Psoas muscle (tissue), 8 donors: ENCODE measurements at regions of chr3 and their contacts with region 1.

Region 1: DNA sequence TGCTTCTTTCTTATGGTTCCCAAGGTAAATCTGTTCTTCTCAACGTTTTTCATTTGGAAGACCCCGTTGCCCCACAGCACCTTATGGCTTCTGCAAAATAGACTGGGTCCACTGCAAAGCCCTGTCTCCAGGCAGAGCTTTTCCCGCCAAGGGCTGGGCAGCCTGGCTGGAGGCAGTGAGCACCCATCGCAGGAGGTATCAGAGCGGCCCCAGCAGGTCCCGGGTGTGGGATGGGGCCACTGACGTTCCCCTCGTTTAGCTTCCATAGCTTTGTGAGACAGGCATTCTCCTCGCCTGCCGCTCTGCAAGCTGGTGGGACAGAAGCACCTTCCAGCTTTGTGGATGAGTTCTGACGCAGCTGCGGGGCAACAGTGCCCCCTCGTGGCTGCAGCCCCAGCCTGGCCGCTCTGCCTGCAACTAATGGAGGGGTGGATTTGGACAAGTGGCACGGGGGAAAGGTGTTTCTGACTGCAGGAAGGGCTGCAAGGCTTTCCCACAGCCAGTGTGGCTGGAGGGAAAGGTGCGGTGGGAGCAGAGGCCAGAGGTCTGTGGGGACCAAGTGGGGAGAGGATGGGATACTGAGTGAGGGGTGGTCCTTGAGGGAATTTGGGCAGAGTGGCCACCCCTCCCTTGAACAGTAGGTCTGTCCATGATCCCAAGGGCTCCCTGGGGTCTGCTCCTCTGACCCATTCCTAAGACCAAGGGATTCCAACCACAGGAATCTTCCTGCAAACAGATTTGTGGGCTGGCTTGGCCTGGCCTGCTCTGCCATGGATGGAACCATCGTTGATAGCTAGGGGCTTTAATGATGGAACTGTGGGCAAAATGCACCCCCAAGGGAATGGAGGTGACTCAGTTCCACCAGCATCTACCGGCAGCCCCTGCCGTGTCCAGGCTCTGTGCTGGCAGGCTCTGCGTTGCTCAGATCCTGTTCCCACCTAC is 99.4 kb downstream of the FBLN2 start:
- DNase-seq: peak; percentile 83 to 88
- ATAC-seq: peak; percentile 80 to 90 (median 84)
- H3K4me3 ChIP-seq: no peak overlapping the region
- H3K27ac ChIP-seq: no peak overlapping the region
- H3K4me1 ChIP-seq: peaks cover 4% of the 10 kb centered on the region
- H3K27me3 ChIP-seq: peaks cover 0 to 9% (median 0%) of the 10 kb centered on the region in 3 donors
- CTCF ChIP-seq: peak; percentile 97

Region 2: DNA sequence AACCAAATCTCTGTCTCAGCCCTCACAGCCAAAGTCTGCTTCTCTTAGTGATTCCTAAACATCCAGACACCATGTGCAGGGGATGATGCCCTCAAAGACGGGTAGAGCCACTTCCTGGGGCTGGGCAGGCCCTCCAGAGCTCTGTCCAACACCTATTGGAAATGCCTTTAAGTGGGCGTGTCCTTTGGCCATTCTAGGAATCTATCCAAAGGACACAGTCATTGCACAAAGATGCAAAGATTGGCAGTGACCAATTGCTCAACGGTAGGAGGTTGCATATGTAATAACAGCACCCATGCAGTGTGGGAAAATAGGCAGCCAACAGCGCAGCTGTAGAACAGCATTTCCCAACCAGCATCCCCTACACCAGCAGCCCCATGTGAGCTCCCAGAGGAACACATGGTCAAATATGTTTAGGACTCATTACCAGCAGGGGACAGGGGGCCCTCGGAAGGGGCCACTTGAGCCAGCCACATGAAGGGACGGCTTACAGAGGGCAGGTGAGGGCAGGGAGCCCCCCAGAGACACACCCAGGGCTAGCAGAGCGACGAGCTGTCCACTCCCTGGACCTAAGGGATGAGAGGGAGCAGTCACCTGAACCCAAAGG is 432.3 kb before region 1 on chr3:
- intact Hi-C with region 1: loop called in 1 of 2 experiments (anchors 5 kb)
- DNase-seq: peak in 1 of 2 donors; percentile 23
- ATAC-seq: peak in 1 of 4 donors; percentile 4
- H3K4me3 ChIP-seq: no peak overlapping the region
- H3K27ac ChIP-seq: no peak overlapping the region
- H3K4me1 ChIP-seq: no peaks in the 10 kb centered on the region
- H3K27me3 ChIP-seq: no peaks in the 10 kb centered on the region
- CTCF ChIP-seq: no peak

Region 3: GRCh38 chr3:13419505-13420044 is 228.8 kb before region 1 on chr3:
- intact Hi-C with region 1: no loop called
- DNase-seq: peak; percentile 41 to 71
- ATAC-seq: peak; percentile 81 to 90 (median 84)
- H3K4me3 ChIP-seq: peak overlapping the region; percentile 77
- H3K27ac ChIP-seq: peak overlapping the region; percentile 78
- H3K4me1 ChIP-seq: peaks cover 9% of the 10 kb centered on the region
- H3K27me3 ChIP-seq: no peaks in the 10 kb centered on the region
- CTCF ChIP-seq: peak; percentile 10

Region 4: DNA sequence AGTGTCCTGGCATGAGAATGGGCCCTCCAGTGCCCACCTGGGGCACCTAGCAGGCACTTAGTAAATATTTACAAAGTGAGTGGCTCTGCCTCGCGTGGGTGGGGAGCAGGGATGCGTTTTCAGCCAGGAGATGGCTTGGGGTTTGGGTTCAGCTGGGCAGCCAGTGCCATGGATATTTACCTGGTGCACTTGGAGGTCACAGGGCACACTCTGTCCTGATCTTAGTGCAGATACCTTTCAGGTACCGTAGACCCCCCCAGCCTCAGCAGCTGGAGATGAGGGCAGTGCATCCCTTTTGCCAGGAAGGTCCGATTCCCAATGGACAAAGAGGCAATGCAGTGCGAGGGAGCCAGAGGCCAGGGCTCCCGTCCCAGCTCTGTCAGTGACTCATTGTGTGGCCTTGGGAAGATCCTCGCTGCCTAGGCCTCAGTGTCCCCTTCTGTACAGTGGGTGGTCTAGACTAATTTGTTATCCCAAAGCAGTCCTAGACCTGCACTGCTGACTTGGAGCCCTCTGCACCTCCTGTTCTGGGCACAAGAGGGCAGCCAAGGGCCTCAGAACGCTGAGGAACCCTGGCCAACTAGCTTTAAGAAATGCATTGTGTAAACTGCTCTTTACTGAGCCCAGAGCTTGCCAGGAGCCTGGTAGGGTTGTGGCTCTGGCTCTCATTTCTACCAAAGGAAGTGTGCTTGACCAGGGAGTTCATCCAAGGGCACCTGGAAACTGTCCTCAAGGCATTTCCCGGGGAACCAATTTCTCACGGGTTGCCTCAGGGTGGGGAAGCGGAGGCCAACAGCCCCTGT is 152.2 kb before region 1 on chr3:
- intact Hi-C with region 1: loop called (anchors 1 to 2 kb)
- DNase-seq: peak; percentile 76 to 89
- ATAC-seq: peak; percentile 92 to 96 (median 96)
- H3K4me3 ChIP-seq: no peak overlapping the region
- H3K27ac ChIP-seq: no peak overlapping the region
- H3K4me1 ChIP-seq: peaks cover 12% of the 10 kb centered on the region
- H3K27me3 ChIP-seq: no peaks in the 10 kb centered on the region
- CTCF ChIP-seq: peak; percentile 89

Region 5: GRCh38 chr3:13574798-13575451 is 73.4 kb before region 1 on chr3:
- intact Hi-C with region 1: loop called in 1 of 2 experiments (anchors 5 kb)
- DNase-seq: peak in 1 of 2 donors; percentile 38
- ATAC-seq: no peak
- H3K4me3 ChIP-seq: no peak overlapping the region
- H3K27ac ChIP-seq: no peak overlapping the region
- H3K4me1 ChIP-seq: no peaks in the 10 kb centered on the region
- H3K27me3 ChIP-seq: peaks cover 0 to 13% (median 0%) of the 10 kb centered on the region in 3 donors
- CTCF ChIP-seq: no peak

Region 6: GRCh38 chr3:13812034-13812471 is 163.7 kb after region 1 on chr3:
- intact Hi-C with region 1: no loop called
- DNase-seq: no peak
- ATAC-seq: no peak
- H3K4me3 ChIP-seq: no peak overlapping the region
- H3K27ac ChIP-seq: no peak overlapping the region
- H3K4me1 ChIP-seq: no peaks in the 10 kb centered on the region
- H3K27me3 ChIP-seq: peaks cover 0 to 5% (median 5%) of the 10 kb centered on the region in 3 donors
- CTCF ChIP-seq: no peak